ENCODE measurements at regions of chr16 and their contacts with region 1.

Region 1: GRCh38 chr16:81035398-81035974 is at the start of gene ATMIN:
- DNase-seq: peak; percentile 36
- H3K4me3 ChIP-seq: peak within 1 kb of the TSS; percentile 74
- H3K27ac ChIP-seq: peak within 1 kb of the TSS; percentile 47
- H3K27me3 ChIP-seq: no peaks in the 10 kb centered on the region
- CTCF ChIP-seq: peak; percentile 95
- polyA plus RNA-seq, gene ATMIN: 38.1 and 48.1 TPM in 2 replicates

Region 2: GRCh38 chr16:80924372-80924978 is 111.0 kb before region 1 on chr16:
- CTCF ChIA-PET with region 1: interaction called, 10 read pairs
- POLR2A ChIA-PET with region 1: no interaction called
- DNase-seq: no peak
- H3K4me3 ChIP-seq: no peak overlapping the region
- H3K27ac ChIP-seq: no peak overlapping the region
- H3K27me3 ChIP-seq: peaks cover 3% of the 10 kb centered on the region
- CTCF ChIP-seq: peak; percentile 65

Region 3: DNA sequence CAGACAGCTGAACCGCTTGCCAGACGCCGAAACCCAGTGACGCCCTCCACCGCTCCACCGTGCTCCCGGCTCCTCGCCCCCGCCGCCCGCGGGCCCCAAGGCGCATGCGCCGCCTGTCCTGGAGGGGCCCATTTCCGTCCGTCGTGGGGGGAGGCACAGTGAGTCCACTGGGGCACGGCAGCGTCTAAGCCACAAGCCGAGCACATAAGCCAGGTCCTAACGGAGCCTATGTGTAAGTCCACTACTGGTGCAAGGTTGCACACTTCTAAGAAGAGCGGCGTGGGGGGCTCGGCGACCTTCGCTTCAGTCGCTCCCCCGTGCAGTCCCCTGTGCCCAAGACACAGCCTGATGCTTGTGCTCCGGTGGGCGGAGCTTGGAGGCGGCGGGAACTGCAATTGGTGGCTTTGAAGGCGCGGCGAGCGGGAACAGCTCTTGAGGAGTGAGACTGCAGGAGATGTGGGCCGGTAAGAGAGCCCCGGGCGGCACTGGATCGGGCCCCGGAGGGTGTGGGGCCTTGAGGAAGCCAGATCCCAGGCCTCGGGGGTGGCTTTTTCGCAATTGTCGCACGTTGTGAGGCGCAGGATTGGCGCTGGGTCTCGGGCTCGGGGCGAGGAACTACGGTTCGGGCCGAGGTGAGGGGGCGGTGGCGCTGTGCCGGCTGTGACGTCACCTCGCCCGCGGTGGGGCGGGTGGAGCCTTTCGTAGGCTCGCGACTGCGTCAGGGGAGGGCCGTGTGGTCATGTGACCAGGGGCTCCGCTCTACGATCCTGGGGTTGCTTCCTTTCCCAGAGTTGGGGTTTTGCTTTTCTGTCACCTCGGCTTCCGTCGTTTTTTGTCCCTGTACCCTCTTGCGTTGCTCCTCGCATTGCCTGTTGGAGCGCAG is 28.4 kb before region 1 on chr16 and contains the starts of genes CENPN and CMC2:
- CTCF ChIA-PET with region 1: interaction called, 47 read pairs
- POLR2A ChIA-PET with region 1: no interaction called
- DNase-seq: peak; percentile 99
- H3K4me3 ChIP-seq: peak within 1 kb of the TSS; percentile 95
- H3K27ac ChIP-seq: peak within 1 kb of the TSS; percentile 98
- H3K27me3 ChIP-seq: no peaks in the 10 kb centered on the region
- CTCF ChIP-seq: peak; percentile 4; the same call in 1 of the 2 replicates
- polyA plus RNA-seq, gene CENPN: 16.2 and 23.1 TPM in 2 replicates
- polyA plus RNA-seq, gene CMC2: 74.7 and 85.2 TPM in 2 replicates

Region 4: GRCh38 chr16:81071816-81072215 is 36.3 kb after region 1 on chr16:
- CTCF ChIA-PET with region 1: interaction called, 16 read pairs
- POLR2A ChIA-PET with region 1: no interaction called
- DNase-seq: no peak
- H3K4me3 ChIP-seq: no peak overlapping the region
- H3K27ac ChIP-seq: no peak overlapping the region
- H3K27me3 ChIP-seq: no peaks in the 10 kb centered on the region
- CTCF ChIP-seq: no peak

Region 5: GRCh38 chr16:81204798-81205680 is 169.6 kb after region 1 on chr16:
- CTCF ChIA-PET with region 1: interaction called, 10 read pairs
- POLR2A ChIA-PET with region 1: no interaction called
- DNase-seq: peak; percentile 27
- H3K4me3 ChIP-seq: no peak overlapping the region
- H3K27ac ChIP-seq: no peak overlapping the region
- H3K27me3 ChIP-seq: peaks cover 17% of the 10 kb centered on the region
- CTCF ChIP-seq: peak; percentile 86

Region 6: GRCh38 chr16:81737885-81738786 is 702.6 kb after region 1 on chr16:
- CTCF ChIA-PET with region 1: interaction called, 11 read pairs
- POLR2A ChIA-PET with region 1: no interaction called
- DNase-seq: no peak
- H3K4me3 ChIP-seq: peak overlapping the region; percentile 27; the same call in 1 of the 2 replicates
- H3K27ac ChIP-seq: no peak overlapping the region
- H3K27me3 ChIP-seq: peaks cover 10% of the 10 kb centered on the region
- CTCF ChIP-seq: peak; percentile 84

Measured in AG04450 (cell line).